Activated B cell treated with CpG ODN at 0.5 μM for 24 hours (primary cell): ENCODE measurements at regions of chr7 and their contacts with region 1.

Region 1: DNA sequence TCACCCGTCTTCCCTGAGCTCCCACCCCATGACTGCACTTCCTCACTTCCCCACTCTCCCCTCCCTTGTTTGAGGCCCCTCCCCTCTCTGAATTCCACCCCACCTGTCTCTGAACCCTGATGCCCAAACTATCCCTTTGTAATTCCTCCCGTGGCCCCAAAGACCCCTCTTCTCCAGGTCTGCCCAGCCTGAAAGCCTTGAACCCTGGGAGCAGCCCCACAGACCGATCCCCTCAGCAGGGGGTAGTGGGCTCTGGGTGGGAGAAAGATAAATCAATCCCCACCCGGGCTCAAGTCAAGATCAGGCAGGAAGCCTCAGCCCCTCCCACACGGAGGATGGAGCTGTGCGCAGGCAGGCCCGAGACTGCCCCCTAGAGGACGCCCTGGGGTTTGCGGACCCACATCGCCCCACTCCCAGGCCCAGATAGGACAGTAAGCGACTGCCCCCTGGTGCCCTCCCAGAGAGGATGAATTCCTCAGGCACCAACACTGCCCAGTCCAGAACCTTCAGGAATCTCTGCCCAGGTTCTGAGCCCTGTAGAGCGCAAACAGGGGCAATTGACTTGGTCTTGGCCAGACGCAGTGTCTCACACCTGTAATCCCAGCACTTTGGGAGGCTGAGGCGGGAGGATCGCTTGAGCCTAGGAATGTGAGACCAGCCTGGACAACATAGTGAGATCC is 11.7 kb downstream of the HSPB1 start:
- DNase-seq: peak; percentile 88
- ATAC-seq: peak; percentile 59
- H3K4me3 Mint-ChIP-seq: no peak overlapping the region
- H3K27ac Mint-ChIP-seq: no peak overlapping the region
- H3K4me1 Mint-ChIP-seq: peaks cover 20% of the 10 kb centered on the region
- H3K27me3 Mint-ChIP-seq: no peaks in the 10 kb centered on the region
- CTCF ChIP-seq: peak; percentile 70

Region 2: DNA sequence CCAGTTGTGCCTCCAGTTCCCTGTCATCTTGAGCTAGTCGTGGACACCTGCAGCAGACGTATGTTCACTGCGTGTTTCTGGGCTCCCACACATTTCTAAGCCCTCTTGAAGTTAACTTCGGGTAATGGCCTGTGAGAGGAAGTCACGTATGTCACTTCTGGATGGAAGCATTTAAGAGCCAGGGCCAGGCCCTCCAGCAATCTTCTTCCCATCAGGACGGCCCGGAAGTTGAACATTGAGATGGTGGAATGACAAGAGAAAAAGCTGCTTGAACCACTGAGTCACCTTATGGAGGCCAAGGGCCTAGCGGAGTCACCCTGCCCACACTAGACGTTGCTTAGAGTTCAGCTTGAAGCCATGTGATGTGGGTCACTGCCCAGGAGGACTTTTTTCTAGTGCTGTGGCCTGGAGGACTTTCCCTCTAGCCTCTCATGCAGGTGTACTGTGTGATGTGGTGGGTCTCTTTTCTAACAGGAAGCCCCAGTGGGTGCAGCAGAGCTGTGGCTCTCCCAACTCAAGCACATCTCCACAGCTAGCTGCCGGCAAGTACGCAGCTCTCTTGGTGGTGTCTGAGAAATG is 385.8 kb before region 1 on chr7:
- CTCF ChIA-PET with region 1: no interaction called
- POLR2A ChIA-PET with region 1: no interaction called
- intact Hi-C with region 1: no loop called
- DNase-seq: no peak
- ATAC-seq: peak; percentile 84
- H3K4me3 Mint-ChIP-seq: no peak overlapping the region
- H3K27ac Mint-ChIP-seq: peak overlapping the region; percentile 46
- H3K4me1 Mint-ChIP-seq: peaks cover 15% of the 10 kb centered on the region
- H3K27me3 Mint-ChIP-seq: no peaks in the 10 kb centered on the region
- CTCF ChIP-seq: no peak

Region 3: DNA sequence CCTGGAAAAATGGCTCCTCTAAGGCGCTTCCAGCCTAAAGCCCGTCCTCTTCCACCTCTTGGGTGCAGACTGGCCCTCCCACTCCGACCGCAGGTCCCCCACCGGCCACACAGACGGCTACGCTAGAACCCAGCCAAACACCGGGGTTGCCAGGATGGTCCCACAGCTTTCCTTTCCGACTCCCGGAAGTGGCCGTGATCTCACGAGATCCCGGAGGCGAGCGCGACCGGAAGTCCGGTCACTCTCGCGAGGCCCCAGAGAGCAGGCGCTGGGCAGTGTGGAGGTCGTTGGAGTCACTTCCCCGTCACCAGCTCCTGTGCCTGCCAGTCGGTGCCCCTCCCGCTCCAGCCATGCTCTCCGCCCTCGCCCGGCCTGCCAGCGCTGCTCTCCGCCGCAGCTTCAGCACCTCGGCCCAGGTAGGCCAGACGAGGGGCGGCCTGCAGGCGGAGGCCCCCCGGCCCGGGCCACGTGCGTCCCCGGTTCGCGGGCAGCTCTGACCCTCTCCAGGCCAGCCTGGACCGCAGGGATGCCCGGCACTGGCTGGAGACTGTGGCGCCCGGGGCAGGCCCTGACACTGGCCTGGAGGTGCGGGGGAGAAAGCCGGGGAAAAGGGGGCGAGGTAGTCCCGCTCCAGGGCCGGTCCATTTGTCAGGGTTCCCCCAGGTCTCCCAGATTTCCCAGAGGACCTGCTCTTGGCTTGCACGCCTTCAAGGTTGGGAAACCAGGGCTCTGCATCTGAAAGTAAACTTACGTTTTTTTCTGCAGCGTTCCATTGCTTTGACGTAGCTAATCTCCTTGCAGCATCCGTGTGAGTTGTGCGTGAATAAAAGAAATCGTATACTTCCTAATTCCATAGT is 266.1 kb before region 1 on chr7 and contains the starts of genes MDH2 and STYXL1:
- CTCF ChIA-PET with region 1: interaction called, 3 read pairs
- POLR2A ChIA-PET with region 1: interaction called, 6 read pairs
- intact Hi-C with region 1: loop called (anchors 2 kb)
- DNase-seq: peak; percentile 82
- ATAC-seq: peak; percentile 89
- H3K4me3 Mint-ChIP-seq: peak within 1 kb of the TSS; percentile 98
- H3K27ac Mint-ChIP-seq: peak within 1 kb of the TSS; percentile 95
- H3K4me1 Mint-ChIP-seq: peaks cover 40% of the 10 kb centered on the region
- H3K27me3 Mint-ChIP-seq: no peaks in the 10 kb centered on the region
- CTCF ChIP-seq: no peak
- total RNA-seq, gene MDH2: 120 and 125 TPM in 2 replicates
- total RNA-seq, gene STYXL1: 23.1 and 28.1 TPM in 2 replicates

Region 4: GRCh38 chr7:76179686-76180085 is 134.5 kb before region 1 on chr7:
- CTCF ChIA-PET with region 1: interaction called, 31 read pairs
- POLR2A ChIA-PET with region 1: interaction called, 3 read pairs
- intact Hi-C with region 1: loop called (anchors 1 kb)
- DNase-seq: no peak
- ATAC-seq: no peak
- H3K4me3 Mint-ChIP-seq: no peak overlapping the region
- H3K27ac Mint-ChIP-seq: no peak overlapping the region
- H3K4me1 Mint-ChIP-seq: peaks cover 3% of the 10 kb centered on the region
- H3K27me3 Mint-ChIP-seq: peaks cover 6% of the 10 kb centered on the region
- CTCF ChIP-seq: no peak

Region 5: GRCh38 chr7:76220185-76221057 is 93.8 kb before region 1 on chr7:
- CTCF ChIA-PET with region 1: no interaction called
- POLR2A ChIA-PET with region 1: no interaction called
- intact Hi-C with region 1: no loop called
- DNase-seq: no peak
- ATAC-seq: no peak
- H3K4me3 Mint-ChIP-seq: no peak overlapping the region
- H3K27ac Mint-ChIP-seq: no peak overlapping the region
- H3K4me1 Mint-ChIP-seq: no peaks in the 10 kb centered on the region
- H3K27me3 Mint-ChIP-seq: peaks cover 44% of the 10 kb centered on the region
- CTCF ChIP-seq: no peak

Region 6: GRCh38 chr7:76291343-76292212 is 22.6 kb before region 1 on chr7:
- CTCF ChIA-PET with region 1: interaction called, 41 read pairs
- POLR2A ChIA-PET with region 1: interaction called, 11 read pairs
- intact Hi-C with region 1: loop called (anchors 1 kb)
- DNase-seq: peak; percentile 74
- ATAC-seq: peak; percentile 81
- H3K4me3 Mint-ChIP-seq: no peak overlapping the region
- H3K27ac Mint-ChIP-seq: no peak overlapping the region
- H3K4me1 Mint-ChIP-seq: peaks cover 7% of the 10 kb centered on the region
- H3K27me3 Mint-ChIP-seq: peaks cover 9% of the 10 kb centered on the region
- CTCF ChIP-seq: peak; percentile 55

Region 7: GRCh38 chr7:76302347-76303201 is 11.6 kb before region 1 on chr7 and contains the start of gene HSPB1:
- CTCF ChIA-PET with region 1: interaction called, 8 read pairs
- POLR2A ChIA-PET with region 1: interaction called, 14 read pairs
- intact Hi-C with region 1: loop called (anchors 1 kb)
- DNase-seq: peak; percentile 65
- ATAC-seq: peak; percentile 76
- H3K4me3 Mint-ChIP-seq: peak within 1 kb of the TSS; percentile 90
- H3K27ac Mint-ChIP-seq: peak within 1 kb of the TSS; percentile 81
- H3K4me1 Mint-ChIP-seq: peaks cover 13% of the 10 kb centered on the region
- H3K27me3 Mint-ChIP-seq: no peaks in the 10 kb centered on the region
- CTCF ChIP-seq: no peak
- total RNA-seq, gene HSPB1: 63.4 and 65.6 TPM in 2 replicates

Region 8: DNA sequence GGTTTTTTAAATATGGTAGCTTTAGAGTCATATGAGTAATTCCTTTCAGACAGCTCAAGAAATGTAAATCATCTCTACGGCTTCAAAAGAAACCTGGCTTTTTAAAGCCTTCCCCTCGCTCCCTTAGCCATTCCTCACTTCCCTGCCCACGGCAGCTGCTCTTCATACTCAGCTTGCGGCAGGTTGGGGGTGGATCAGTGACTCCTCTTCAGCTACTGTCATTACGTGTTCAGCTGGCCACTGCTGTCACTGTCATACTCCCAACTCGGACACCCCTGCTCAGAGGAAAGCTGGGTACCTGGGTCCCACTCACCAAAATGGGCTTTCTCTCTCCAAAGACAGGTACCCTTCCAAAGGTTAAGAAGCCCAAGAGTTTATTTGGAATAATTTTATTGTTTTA is 38.0 kb after region 1 on chr7:
- CTCF ChIA-PET with region 1: no interaction called
- POLR2A ChIA-PET with region 1: interaction called, 12 read pairs
- intact Hi-C with region 1: no loop called
- DNase-seq: no peak
- ATAC-seq: no peak
- H3K4me3 Mint-ChIP-seq: no peak overlapping the region
- H3K27ac Mint-ChIP-seq: no peak overlapping the region
- H3K4me1 Mint-ChIP-seq: peaks cover 48% of the 10 kb centered on the region
- H3K27me3 Mint-ChIP-seq: no peaks in the 10 kb centered on the region
- CTCF ChIP-seq: no peak